ENCODE measurements at regions of chr10 and their contacts with region 1.

Region 1: GRCh38 chr10:31928549-31929260 is at the start of gene ARHGAP12:
- DNase-seq: peak; percentile 92
- ATAC-seq: peak; percentile 80
- H3K4me3 ChIP-seq: peak within 1 kb of the TSS; percentile 77 to 96 (median 93)
- H3K4me3 Mint-ChIP-seq: peak within 1 kb of the TSS; percentile 75
- H3K27ac ChIP-seq: peak within 1 kb of the TSS; percentile 74 to 90
- H3K27ac Mint-ChIP-seq: peak within 1 kb of the TSS; percentile 90
- H3K4me1 ChIP-seq: peaks cover 20 to 31% of the 10 kb centered on the region in 2 donors
- H3K4me1 Mint-ChIP-seq: peaks cover 44% of the 10 kb centered on the region
- H3K27me3 ChIP-seq: no peaks in the 10 kb centered on the region
- H3K27me3 Mint-ChIP-seq: no peaks in the 10 kb centered on the region
- CTCF ChIP-seq: no peak
- total RNA-seq, gene ARHGAP12: 41.0 and 45.3 TPM in 2 replicates

Region 2: DNA sequence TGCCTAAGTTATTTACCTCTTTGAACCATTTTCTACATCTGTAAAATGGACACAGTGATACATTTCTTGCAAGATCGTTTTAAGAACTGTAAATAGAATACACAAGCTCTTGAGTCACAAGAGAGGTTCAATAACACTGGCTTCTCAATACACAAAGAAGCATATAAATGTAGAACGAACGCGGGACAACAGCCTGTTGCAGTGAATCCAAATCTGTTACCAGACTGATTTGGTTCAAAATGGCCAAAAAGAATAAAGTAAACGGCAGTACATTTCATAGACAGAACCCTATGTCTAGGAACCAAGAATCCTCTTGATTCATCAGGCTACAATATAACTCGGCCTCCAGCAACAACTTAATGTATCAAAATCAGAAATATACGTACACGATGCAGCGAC is 1580.3 kb before region 1 on chr10:
- CTCF ChIA-PET with region 1: no interaction called
- POLR2A ChIA-PET with region 1: no interaction called
- intact Hi-C with region 1: loop called (anchors 5 kb)
- DNase-seq: no peak
- ATAC-seq: no peak
- H3K4me3 ChIP-seq: peak overlapping the region; percentile 60 to 98 (median 97)
- H3K4me3 Mint-ChIP-seq: peak overlapping the region; percentile 99
- H3K27ac ChIP-seq: peak overlapping the region; percentile 86 to 88
- H3K27ac Mint-ChIP-seq: peak overlapping the region; percentile 95
- H3K4me1 ChIP-seq: peaks cover 20 to 21% of the 10 kb centered on the region in 2 donors
- H3K4me1 Mint-ChIP-seq: peaks cover 49% of the 10 kb centered on the region
- H3K27me3 ChIP-seq: no peaks in the 10 kb centered on the region
- H3K27me3 Mint-ChIP-seq: no peaks in the 10 kb centered on the region
- CTCF ChIP-seq: no peak

Region 3: GRCh38 chr10:31031558-31032257 is 897.0 kb before region 1 on chr10 and contains the start of gene ZNF438:
- CTCF ChIA-PET with region 1: interaction called, 3 read pairs
- POLR2A ChIA-PET with region 1: no interaction called
- intact Hi-C with region 1: loop called (anchors 2 kb)
- DNase-seq: peak; percentile 98
- ATAC-seq: peak; percentile 84
- H3K4me3 ChIP-seq: peak within 1 kb of the TSS; percentile 61 to 88 (median 76)
- H3K4me3 Mint-ChIP-seq: peak within 1 kb of the TSS; percentile 94
- H3K27ac ChIP-seq: peak within 1 kb of the TSS; percentile 99
- H3K27ac Mint-ChIP-seq: peak within 1 kb of the TSS; percentile 99
- H3K4me1 ChIP-seq: peaks cover 7 to 16% of the 10 kb centered on the region in 2 donors
- H3K4me1 Mint-ChIP-seq: peaks cover 9% of the 10 kb centered on the region
- H3K27me3 ChIP-seq: no peaks in the 10 kb centered on the region
- H3K27me3 Mint-ChIP-seq: no peaks in the 10 kb centered on the region
- CTCF ChIP-seq: peak; percentile 82
- total RNA-seq, gene ZNF438: 3.7 and 3.9 TPM in 2 replicates

Region 4: DNA sequence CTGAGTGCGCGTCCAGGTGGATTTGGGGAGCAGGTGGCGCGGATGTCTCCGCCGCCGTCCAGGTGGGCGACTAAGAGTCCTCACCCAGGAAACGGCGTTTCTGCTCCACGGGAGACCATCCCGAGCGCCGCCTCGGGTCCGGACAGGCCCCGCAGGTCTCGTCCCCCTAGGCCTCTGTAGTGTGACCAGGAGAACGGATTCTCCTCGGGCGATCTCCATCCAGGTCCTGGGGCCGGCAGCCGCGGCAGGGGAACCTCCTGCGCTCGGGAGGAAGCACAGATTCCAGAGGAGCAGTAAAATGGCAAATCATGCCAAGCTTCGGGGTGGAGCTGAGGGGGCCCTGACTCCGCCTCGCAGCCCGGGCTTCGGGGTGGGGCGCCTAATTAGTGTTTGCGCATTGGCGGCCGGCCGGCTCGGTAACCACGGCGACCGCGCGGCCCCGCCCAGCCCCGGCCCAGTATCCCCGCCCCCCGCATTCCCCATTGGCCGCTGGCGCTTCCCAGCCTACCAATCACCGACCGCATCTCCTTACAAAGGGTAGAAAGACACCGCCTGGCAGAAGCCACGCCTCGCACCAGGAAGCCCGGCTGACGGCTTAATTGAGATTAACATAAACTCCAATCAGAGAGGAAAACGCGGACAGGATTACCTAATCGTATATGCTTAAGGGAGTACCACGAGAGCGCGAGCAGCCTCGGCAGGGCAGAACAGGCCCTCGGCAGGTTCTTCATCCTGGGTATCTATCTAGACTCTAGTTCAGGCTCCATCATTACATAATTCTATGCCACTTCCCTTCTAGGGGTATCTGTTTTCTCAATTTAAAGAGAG is 168.7 kb before region 1 on chr10:
- CTCF ChIA-PET with region 1: no interaction called
- POLR2A ChIA-PET with region 1: no interaction called
- intact Hi-C with region 1: loop called (anchors 1 kb)
- DNase-seq: peak; percentile 96
- ATAC-seq: peak; percentile 93
- H3K4me3 ChIP-seq: peak overlapping the region; percentile 71 to 98 (median 94)
- H3K4me3 Mint-ChIP-seq: peak overlapping the region; percentile 92
- H3K27ac ChIP-seq: peak overlapping the region; percentile 85 to 86
- H3K27ac Mint-ChIP-seq: peak overlapping the region; percentile 97
- H3K4me1 ChIP-seq: peaks cover 5 to 14% of the 10 kb centered on the region in 2 donors
- H3K4me1 Mint-ChIP-seq: peaks cover 15% of the 10 kb centered on the region
- H3K27me3 ChIP-seq: no peaks in the 10 kb centered on the region
- H3K27me3 Mint-ChIP-seq: no peaks in the 10 kb centered on the region
- CTCF ChIP-seq: no peak

Region 5: DNA sequence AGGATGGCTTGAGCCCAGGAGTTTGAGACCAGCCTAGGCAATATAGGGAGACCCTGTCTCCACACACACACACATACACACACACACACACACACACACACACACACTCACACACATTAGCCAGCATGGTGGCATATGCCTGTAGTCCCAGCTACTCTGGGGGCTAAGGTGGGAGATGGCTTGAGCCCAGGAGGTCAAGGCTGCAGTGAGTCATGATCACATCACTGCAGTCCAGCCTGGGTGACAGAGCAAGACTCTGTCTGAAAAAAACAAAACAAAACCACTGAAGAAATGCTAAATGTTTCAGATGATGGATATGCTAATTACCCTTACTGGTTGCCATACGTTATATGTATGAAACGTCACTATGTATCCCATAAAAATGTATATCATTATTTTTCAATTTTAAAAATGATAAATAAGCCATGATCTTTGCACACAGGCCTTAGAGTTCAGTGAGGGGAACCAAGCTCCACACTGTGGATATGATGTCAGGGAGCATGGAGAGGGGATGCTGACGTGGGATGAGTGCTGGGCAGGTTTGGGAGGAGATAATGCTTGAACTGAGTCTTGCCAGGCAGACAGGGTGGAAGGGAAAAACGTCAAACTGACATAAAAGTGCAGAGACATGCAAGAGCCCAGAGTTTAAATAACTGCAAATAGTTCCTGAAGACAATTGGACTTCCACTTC is 45.9 kb after region 1 on chr10:
- CTCF ChIA-PET with region 1: no interaction called
- POLR2A ChIA-PET with region 1: no interaction called
- intact Hi-C with region 1: no loop called
- DNase-seq: no peak
- ATAC-seq: no peak
- H3K4me3 ChIP-seq: no peak overlapping the region
- H3K4me3 Mint-ChIP-seq: no peak overlapping the region
- H3K27ac ChIP-seq: no peak overlapping the region
- H3K27ac Mint-ChIP-seq: no peak overlapping the region
- H3K4me1 ChIP-seq: peaks cover 12% of the 10 kb centered on the region in 2 donors
- H3K4me1 Mint-ChIP-seq: peaks cover 14% of the 10 kb centered on the region
- H3K27me3 ChIP-seq: no peaks in the 10 kb centered on the region
- H3K27me3 Mint-ChIP-seq: no peaks in the 10 kb centered on the region
- CTCF ChIP-seq: no peak

Region 6: DNA sequence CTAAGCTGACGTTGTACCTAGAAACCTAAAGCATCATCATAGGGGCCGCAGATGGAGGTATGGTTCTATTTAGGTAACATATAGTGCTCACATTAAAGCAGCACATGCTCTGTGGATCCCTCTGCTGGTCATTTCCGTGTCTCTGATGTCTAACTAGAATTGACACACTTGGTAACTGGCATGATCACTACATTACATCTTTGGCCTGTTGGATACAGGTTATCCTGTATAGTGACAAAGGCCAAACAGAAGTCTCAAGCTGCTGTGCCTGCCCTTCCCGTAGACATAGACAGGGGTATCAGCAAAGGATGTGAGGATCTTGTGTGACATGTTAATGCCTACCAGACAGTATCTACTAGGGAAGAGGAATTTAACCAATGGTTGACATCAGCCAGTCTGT is 76.3 kb after region 1 on chr10:
- CTCF ChIA-PET with region 1: interaction called, 4 read pairs
- POLR2A ChIA-PET with region 1: no interaction called
- intact Hi-C with region 1: loop called (anchors 5 kb)
- DNase-seq: peak; percentile 57
- ATAC-seq: peak; percentile 57
- H3K4me3 ChIP-seq: no peak overlapping the region
- H3K4me3 Mint-ChIP-seq: no peak overlapping the region
- H3K27ac ChIP-seq: no peak overlapping the region
- H3K27ac Mint-ChIP-seq: peak overlapping the region; percentile 43
- H3K4me1 ChIP-seq: no peaks in the 10 kb centered on the region
- H3K4me1 Mint-ChIP-seq: peaks cover 3% of the 10 kb centered on the region
- H3K27me3 ChIP-seq: no peaks in the 10 kb centered on the region
- H3K27me3 Mint-ChIP-seq: no peaks in the 10 kb centered on the region
- CTCF ChIP-seq: peak; percentile 63

Region 7: DNA sequence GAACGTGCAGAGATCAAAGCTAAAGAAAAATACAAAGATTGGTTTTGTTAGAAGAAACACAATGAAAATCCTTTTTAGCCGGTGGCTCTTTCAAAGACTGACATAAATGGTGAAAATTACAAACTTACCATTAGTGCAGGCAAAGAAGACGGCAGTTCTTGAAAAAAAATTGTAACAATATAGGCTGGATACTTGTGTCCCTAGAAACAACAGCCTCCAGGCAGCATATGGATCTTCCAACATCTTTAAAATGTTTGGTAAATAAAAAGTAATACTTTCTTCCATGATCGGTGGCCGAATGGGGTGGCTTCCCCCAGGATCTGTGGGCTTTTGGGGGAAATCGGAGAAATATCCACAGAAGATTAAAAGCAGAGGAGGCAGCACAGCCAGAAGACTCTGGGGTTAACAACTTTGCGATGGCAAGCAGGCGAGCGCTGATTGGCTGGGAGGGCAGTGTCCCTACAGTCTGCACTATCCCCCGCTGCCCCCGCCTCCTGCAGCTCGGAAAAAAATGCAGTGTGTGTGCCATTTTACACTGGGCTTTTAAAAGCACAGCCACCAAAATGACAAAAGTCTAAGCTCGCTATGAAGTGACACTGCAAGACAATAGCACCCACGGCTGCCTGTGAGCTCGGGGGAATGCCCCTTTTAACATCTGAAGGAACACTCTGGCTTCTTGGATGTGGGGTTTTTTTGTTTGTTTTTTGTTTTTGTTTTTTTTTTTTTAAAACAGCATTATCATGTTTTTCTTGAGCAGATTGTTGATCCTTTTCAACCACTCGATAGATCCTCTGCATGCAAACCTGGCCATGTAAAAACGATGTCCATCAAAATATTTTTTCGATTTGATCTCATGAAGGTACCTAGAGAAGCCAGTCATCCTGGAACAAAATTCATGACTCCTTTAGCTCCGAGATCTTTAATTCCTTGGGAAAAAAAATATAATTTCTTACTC is 449.9 kb after region 1 on chr10:
- CTCF ChIA-PET with region 1: no interaction called
- POLR2A ChIA-PET with region 1: no interaction called
- intact Hi-C with region 1: loop called (anchors 5 kb)
- DNase-seq: peak; percentile 90
- ATAC-seq: peak; percentile 95
- H3K4me3 ChIP-seq: peak overlapping the region; percentile 63 to 99 (median 83)
- H3K4me3 Mint-ChIP-seq: no peak overlapping the region
- H3K27ac ChIP-seq: peak overlapping the region; percentile 73 to 85
- H3K27ac Mint-ChIP-seq: no peak overlapping the region
- H3K4me1 ChIP-seq: peaks cover 10 to 23% of the 10 kb centered on the region in 2 donors
- H3K4me1 Mint-ChIP-seq: peaks cover 20% of the 10 kb centered on the region
- H3K27me3 ChIP-seq: no peaks in the 10 kb centered on the region
- H3K27me3 Mint-ChIP-seq: no peaks in the 10 kb centered on the region
- CTCF ChIP-seq: no peak

Measured in B cell (primary cell).